ENCODE measurements at regions of chr1 and their contacts with region 1.

Region 1: GRCh38 chr1:47997289-47998200 is at the start of gene TRABD2B:
- DNase-seq: peak; percentile 63 to 95
- H3K4me3 ChIP-seq: peak within 1 kb of the TSS; percentile 39 to 86 (median 62)
- H3K27ac ChIP-seq: no peak within 1 kb of the TSS
- H3K4me1 ChIP-seq: peaks cover 5 to 17% (median 13%) of the 10 kb centered on the region in 4 experiments
- H3K27me3 ChIP-seq: peaks cover 0 to 30% (median 25%) of the 10 kb centered on the region in 4 experiments; a peak in 6 of 7 replicates
- CTCF ChIP-seq: peak; percentile 81 to 97 (median 86)
- EP300 ChIP-seq: no peak
- POLR2A ChIP-seq: no peak; a peak in 1 of 3 replicates
- RAD21 ChIP-seq: peak; percentile 79 to 90
- total RNA-seq, gene TRABD2B: 3.4 and 3.5 TPM in 2 replicates

Region 2: GRCh38 chr1:47927165-47927564 is 70.4 kb before region 1 on chr1:
- CTCF ChIA-PET with region 1: no interaction called
- POLR2A ChIA-PET with region 1: no interaction called
- DNase-seq: no peak
- H3K4me3 ChIP-seq: no peak overlapping the region
- H3K27ac ChIP-seq: no peak overlapping the region
- H3K4me1 ChIP-seq: no peaks in the 10 kb centered on the region; a peak in 1 of 7 replicates
- H3K27me3 ChIP-seq: no peaks in the 10 kb centered on the region; a peak in 3 of 7 replicates
- CTCF ChIP-seq: no peak
- EP300 ChIP-seq: no peak
- POLR2A ChIP-seq: no peak
- RAD21 ChIP-seq: no peak

Region 3: GRCh38 chr1:47948126-47948525 is 49.4 kb before region 1 on chr1:
- CTCF ChIA-PET with region 1: interaction called, 17 read pairs
- POLR2A ChIA-PET with region 1: interaction called, 3 read pairs
- DNase-seq: peak in 1 of 2 experiments; percentile 27
- H3K4me3 ChIP-seq: no peak overlapping the region
- H3K27ac ChIP-seq: no peak overlapping the region
- H3K4me1 ChIP-seq: no peaks in the 10 kb centered on the region
- H3K27me3 ChIP-seq: peaks cover 0 to 3% (median 0%) of the 10 kb centered on the region in 4 experiments; a peak in 3 of 7 replicates
- CTCF ChIP-seq: peak; percentile 48 to 82 (median 73)
- EP300 ChIP-seq: peak in 1 of 2 experiments; percentile 26; a peak in 1 of 3 replicates
- POLR2A ChIP-seq: no peak
- RAD21 ChIP-seq: peak; percentile 87 to 90

Region 4: DNA sequence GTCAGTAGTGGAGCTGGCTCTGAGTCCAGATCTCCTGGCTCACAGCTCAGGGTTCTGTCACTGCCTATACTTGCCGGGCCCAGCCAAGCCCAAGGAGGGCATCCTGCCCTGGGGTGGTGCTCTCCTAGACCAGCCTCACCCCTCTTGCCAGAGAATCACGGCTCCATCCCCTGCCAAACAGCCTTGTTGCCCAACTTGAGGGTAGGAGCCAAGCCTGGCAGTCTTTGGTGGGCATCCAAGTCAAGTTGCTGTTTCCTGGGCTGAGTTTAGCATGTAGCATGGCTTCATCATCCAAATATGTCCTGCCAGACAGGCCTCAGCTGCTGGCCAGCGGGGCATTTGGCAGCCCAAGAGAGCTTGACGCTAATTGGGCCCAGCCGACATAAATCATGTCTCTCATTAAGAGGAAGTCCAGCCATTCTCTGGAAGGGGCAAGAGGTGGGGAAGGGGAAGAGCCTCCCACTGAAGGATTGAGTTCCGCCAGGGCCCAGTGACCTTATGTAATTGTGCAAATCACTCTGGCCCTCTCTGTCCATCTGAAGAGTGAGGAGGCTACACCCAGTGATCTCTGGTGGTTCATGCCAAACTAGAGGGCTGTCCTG is 22.3 kb after region 1 on chr1:
- CTCF ChIA-PET with region 1: interaction called, 13 read pairs
- POLR2A ChIA-PET with region 1: no interaction called
- DNase-seq: no peak
- H3K4me3 ChIP-seq: no peak overlapping the region
- H3K27ac ChIP-seq: no peak overlapping the region
- H3K4me1 ChIP-seq: peaks cover 0 to 2% (median 0%) of the 10 kb centered on the region in 4 experiments; a peak in 1 of 7 replicates
- H3K27me3 ChIP-seq: no peaks in the 10 kb centered on the region; a peak in 1 of 7 replicates
- CTCF ChIP-seq: no peak
- EP300 ChIP-seq: no peak
- POLR2A ChIP-seq: no peak
- RAD21 ChIP-seq: no peak

Region 5: DNA sequence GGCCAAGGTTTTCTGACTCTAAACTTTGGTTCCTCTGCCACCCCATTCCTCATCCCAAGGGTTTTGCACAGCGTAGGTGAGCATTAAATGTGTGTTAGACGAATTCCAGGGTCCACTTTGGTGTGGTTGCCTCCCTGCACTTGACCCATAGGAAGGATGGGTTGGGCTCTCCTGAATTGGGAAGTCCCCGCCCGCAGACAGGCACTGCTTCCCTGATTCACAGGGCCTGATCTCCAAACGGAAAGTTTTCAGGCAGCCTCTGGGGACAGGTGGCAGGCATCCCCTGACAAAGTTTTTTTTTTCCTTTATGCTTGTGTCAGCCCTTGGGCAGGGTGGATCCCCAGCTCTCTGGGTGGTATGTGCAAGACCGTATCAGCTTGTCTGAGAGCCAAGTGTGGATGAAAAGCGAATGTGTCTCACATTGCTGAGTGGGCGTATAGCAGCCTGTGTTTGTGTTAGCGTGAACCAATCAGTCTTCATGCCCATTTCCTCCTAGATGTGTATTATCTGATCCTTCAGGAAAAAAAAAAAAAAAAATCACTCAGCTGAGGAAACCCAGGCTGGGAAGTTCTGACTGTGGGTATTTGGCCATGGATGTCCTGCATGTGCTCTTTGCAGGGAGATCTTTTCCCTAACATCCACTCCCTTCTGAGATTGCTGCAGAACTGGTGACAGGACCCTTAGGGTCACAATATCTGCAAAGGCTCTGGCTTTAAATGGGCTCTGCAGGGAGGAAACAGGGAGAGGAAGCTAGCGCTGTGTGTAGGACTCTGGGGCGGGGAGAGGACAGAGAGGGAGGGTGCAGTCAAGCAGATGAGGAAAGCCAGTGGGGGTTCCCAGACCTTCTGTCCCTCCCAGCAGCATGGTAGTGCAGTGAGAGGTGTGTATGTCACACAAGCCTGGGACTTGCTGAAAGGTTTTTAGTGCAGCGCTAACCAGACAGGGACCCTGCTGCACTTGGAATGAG is 41.8 kb after region 1 on chr1:
- CTCF ChIA-PET with region 1: interaction called, 11 read pairs
- POLR2A ChIA-PET with region 1: no interaction called
- DNase-seq: no peak
- H3K4me3 ChIP-seq: no peak overlapping the region
- H3K27ac ChIP-seq: no peak overlapping the region
- H3K4me1 ChIP-seq: peaks cover 6 to 14% (median 11%) of the 10 kb centered on the region in 4 experiments
- H3K27me3 ChIP-seq: no peaks in the 10 kb centered on the region
- CTCF ChIP-seq: no peak
- EP300 ChIP-seq: no peak
- POLR2A ChIP-seq: no peak
- RAD21 ChIP-seq: no peak

Region 6: GRCh38 chr1:48093696-48094528 is 96.4 kb after region 1 on chr1:
- CTCF ChIA-PET with region 1: interaction called, 10 read pairs
- POLR2A ChIA-PET with region 1: interaction called, 4 read pairs
- DNase-seq: peak; percentile 43 to 95
- H3K4me3 ChIP-seq: peak overlapping the region in 1 of 4 experiments; percentile 42; a peak in 1 of 8 replicates
- H3K27ac ChIP-seq: no peak overlapping the region
- H3K4me1 ChIP-seq: no peaks in the 10 kb centered on the region
- H3K27me3 ChIP-seq: peaks cover 0 to 4% (median 1%) of the 10 kb centered on the region in 4 experiments; a peak in 1 of 7 replicates
- CTCF ChIP-seq: peak; percentile 93 to 97 (median 97)
- EP300 ChIP-seq: no peak
- POLR2A ChIP-seq: no peak
- RAD21 ChIP-seq: peak; percentile 83 to 89

Measured in H1 (cell line).